ENCODE measurements at regions of chr15 and their contacts with region 1.

Region 1: GRCh38 chr15:59160880-59161593 is 45.6 kb upstream of the LDHAL6B start:
- DNase-seq: peak; percentile 47 to 55
- H3K4me3 ChIP-seq: no peak overlapping the region
- H3K4me3 Mint-ChIP-seq: no peak overlapping the region
- H3K27ac Mint-ChIP-seq: no peak overlapping the region
- H3K4me1 ChIP-seq: peaks cover 8% of the 10 kb centered on the region
- H3K4me1 Mint-ChIP-seq: peaks cover 2% of the 10 kb centered on the region
- H3K27me3 ChIP-seq: no peaks in the 10 kb centered on the region
- H3K27me3 Mint-ChIP-seq: no peaks in the 10 kb centered on the region
- CTCF ChIP-seq: peak in 1 of 2 experiments; percentile 44

Region 2: DNA sequence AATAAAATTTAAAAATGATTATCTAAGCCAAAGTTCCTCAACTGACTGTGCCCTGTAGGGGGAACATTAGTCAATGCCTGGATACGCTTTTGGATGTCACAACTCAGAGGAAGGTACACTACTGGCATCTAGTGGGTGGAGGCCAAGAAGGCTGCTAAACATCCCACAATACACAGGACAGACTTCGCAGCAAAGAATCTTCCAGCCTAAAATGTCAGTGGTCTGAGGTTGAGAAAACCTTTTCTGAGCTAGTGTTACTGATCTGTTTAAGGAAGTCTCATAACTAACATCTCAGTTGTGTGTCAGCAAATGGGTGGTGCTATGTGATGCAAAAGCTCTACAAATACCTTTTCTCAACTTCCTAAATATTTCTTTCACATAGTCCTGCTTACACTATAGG is 24.7 kb after region 1 on chr15:
- CTCF ChIA-PET with region 1: no interaction called
- POLR2A ChIA-PET with region 1: no interaction called
- intact Hi-C with region 1: no loop called
- DNase-seq: no peak
- H3K4me3 ChIP-seq: no peak overlapping the region
- H3K4me3 Mint-ChIP-seq: no peak overlapping the region
- H3K27ac Mint-ChIP-seq: no peak overlapping the region
- H3K4me1 ChIP-seq: no peaks in the 10 kb centered on the region
- H3K4me1 Mint-ChIP-seq: no peaks in the 10 kb centered on the region
- H3K27me3 ChIP-seq: no peaks in the 10 kb centered on the region
- H3K27me3 Mint-ChIP-seq: no peaks in the 10 kb centered on the region
- CTCF ChIP-seq: no peak

Region 3: GRCh38 chr15:59410391-59410896 is 249.4 kb after region 1 on chr15:
- CTCF ChIA-PET with region 1: no interaction called
- POLR2A ChIA-PET with region 1: no interaction called
- intact Hi-C with region 1: loop called (anchors 10 kb)
- DNase-seq: peak in 1 of 2 experiments; percentile 8
- H3K4me3 ChIP-seq: no peak overlapping the region
- H3K4me3 Mint-ChIP-seq: no peak overlapping the region
- H3K27ac Mint-ChIP-seq: peak overlapping the region; percentile 29
- H3K4me1 ChIP-seq: peaks cover 9% of the 10 kb centered on the region
- H3K4me1 Mint-ChIP-seq: no peaks in the 10 kb centered on the region
- H3K27me3 ChIP-seq: no peaks in the 10 kb centered on the region
- H3K27me3 Mint-ChIP-seq: no peaks in the 10 kb centered on the region
- CTCF ChIP-seq: no peak